Breast epithelium (tissue), 4 donors: ENCODE measurements at regions of chr17 and their contacts with region 1.

Region 1: GRCh38 chr17:63356337-63356757 is 89.8 kb downstream of the CYB561 start:
- DNase-seq: no peak
- H3K4me3 ChIP-seq: no peak overlapping the region
- H3K27ac ChIP-seq: peak overlapping the region in 1 of 2 donors; percentile 26
- H3K4me1 ChIP-seq: no peaks in the 10 kb centered on the region
- H3K27me3 ChIP-seq: no peaks in the 10 kb centered on the region
- CTCF ChIP-seq: no peak
- POLR2A ChIP-seq: no peak

Region 2: GRCh38 chr17:61444831-61445230 is 1911.5 kb before region 1 on chr17:
- intact Hi-C with region 1: loop called (anchors 10 kb)
- DNase-seq: no peak
- H3K4me3 ChIP-seq: no peak overlapping the region
- H3K27ac ChIP-seq: no peak overlapping the region
- H3K4me1 ChIP-seq: no peaks in the 10 kb centered on the region
- H3K27me3 ChIP-seq: peaks cover 0 to 4% of the 10 kb centered on the region in 2 donors
- CTCF ChIP-seq: no peak
- POLR2A ChIP-seq: no peak